ENCODE measurements at regions of chr18 and their contacts with region 1.

Region 1: GRCh38 chr18:24766376-24766775 is 305.9 kb downstream of the HRH4 start:
- DNase-seq: no peak
- ATAC-seq: no peak
- H3K4me3 ChIP-seq: no peak overlapping the region
- H3K27ac ChIP-seq: no peak overlapping the region
- H3K4me1 ChIP-seq: no peaks in the 10 kb centered on the region
- H3K27me3 ChIP-seq: no peaks in the 10 kb centered on the region
- CTCF ChIP-seq: no peak

Region 2: GRCh38 chr18:24560511-24560981 is 205.8 kb before region 1 on chr18:
- CTCF ChIA-PET with region 1: no interaction called
- POLR2A ChIA-PET with region 1: interaction called, 29 read pairs
- intact Hi-C with region 1: no loop called
- DNase-seq: no peak
- ATAC-seq: no peak
- H3K4me3 ChIP-seq: no peak overlapping the region
- H3K27ac ChIP-seq: no peak overlapping the region
- H3K4me1 ChIP-seq: no peaks in the 10 kb centered on the region
- H3K27me3 ChIP-seq: peaks cover 86% of the 10 kb centered on the region
- CTCF ChIP-seq: no peak

Region 3: GRCh38 chr18:24860978-24861680 is 94.8 kb after region 1 on chr18:
- CTCF ChIA-PET with region 1: no interaction called
- POLR2A ChIA-PET with region 1: interaction called, 12 read pairs
- intact Hi-C with region 1: no loop called
- DNase-seq: no peak
- ATAC-seq: no peak
- H3K4me3 ChIP-seq: no peak overlapping the region
- H3K27ac ChIP-seq: no peak overlapping the region
- H3K4me1 ChIP-seq: no peaks in the 10 kb centered on the region
- H3K27me3 ChIP-seq: peaks cover 68% of the 10 kb centered on the region
- CTCF ChIP-seq: no peak

Region 4: GRCh38 chr18:25190472-25190871 is 424.1 kb after region 1 on chr18:
- CTCF ChIA-PET with region 1: no interaction called
- POLR2A ChIA-PET with region 1: no interaction called
- intact Hi-C with region 1: no loop called
- DNase-seq: no peak
- ATAC-seq: no peak
- H3K4me3 ChIP-seq: no peak overlapping the region
- H3K27ac ChIP-seq: no peak overlapping the region
- H3K4me1 ChIP-seq: no peaks in the 10 kb centered on the region
- H3K27me3 ChIP-seq: peaks cover 83% of the 10 kb centered on the region
- CTCF ChIP-seq: no peak

Measured in PC-3 (cell line).